A673 (cell line): ENCODE measurements at regions of chr2 and their contacts with region 1.

Region 1: DNA sequence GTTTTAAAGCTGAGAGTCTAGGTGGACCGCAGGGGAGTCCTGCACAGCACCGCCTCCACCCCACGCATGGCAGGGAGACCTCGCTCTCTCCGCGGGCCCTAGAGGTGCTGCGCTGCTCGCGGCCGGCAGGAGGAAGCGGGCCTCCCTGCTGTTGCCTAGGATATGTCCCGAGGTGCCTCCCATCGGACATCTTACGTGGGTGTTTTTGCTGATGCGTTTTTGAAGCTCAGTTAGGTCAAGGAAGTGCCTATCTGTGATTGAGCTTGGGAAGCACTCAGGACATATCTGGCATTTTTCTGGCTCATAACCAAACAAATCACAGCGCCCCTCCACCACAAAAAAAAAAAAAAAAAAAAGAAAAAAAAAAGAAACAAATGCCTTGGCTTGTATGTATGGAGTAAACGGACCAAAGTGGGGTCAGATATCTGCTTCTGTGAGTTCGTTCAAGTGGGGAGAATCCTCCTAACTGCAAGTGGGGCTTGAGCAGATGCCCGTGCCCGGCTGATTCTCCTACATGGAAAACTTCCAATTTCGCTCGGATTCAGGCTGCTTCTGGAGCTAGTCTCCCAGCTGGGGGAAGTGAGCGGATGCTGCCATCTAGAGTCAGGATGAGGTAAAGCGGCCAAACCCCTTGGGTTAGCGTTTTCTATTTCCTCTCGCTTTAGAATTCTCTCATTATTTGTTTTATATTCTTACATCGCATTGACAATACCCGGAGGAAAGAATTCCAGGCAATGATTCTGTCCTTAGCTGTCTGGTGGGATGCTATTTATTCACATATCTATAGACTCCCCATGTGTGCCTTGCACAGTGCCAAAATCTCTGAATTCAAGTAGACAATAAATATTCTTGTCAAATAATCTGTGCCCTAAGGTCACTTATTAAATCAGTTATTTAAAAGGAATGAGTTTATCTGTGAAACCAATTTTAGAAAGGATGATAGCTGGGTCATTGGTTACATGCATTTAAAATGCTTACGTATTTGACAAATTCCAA is 95.3 kb downstream of the CD8B2 start:
- DNase-seq: peak; percentile 86
- H3K4me3 ChIP-seq: peak overlapping the region; percentile 28
- H3K27ac ChIP-seq: no peak overlapping the region
- H3K4me1 ChIP-seq: no peaks in the 10 kb centered on the region
- H3K27me3 ChIP-seq: peaks cover 19% of the 10 kb centered on the region
- CTCF ChIP-seq: peak; percentile 82

Region 2: GRCh38 chr2:106104332-106105062 is 477.9 kb before region 1 on chr2:
- CTCF ChIA-PET with region 1: no interaction called
- POLR2A ChIA-PET with region 1: no interaction called
- intact Hi-C with region 1: loop called (anchors 5 kb)
- DNase-seq: peak; percentile 70
- H3K4me3 ChIP-seq: no peak overlapping the region
- H3K27ac ChIP-seq: no peak overlapping the region
- H3K4me1 ChIP-seq: no peaks in the 10 kb centered on the region
- H3K27me3 ChIP-seq: no peaks in the 10 kb centered on the region
- CTCF ChIP-seq: peak; percentile 93

Region 3: GRCh38 chr2:106537047-106537446 is 45.4 kb before region 1 on chr2:
- CTCF ChIA-PET with region 1: no interaction called
- POLR2A ChIA-PET with region 1: no interaction called
- intact Hi-C with region 1: no loop called
- DNase-seq: no peak
- H3K4me3 ChIP-seq: no peak overlapping the region
- H3K27ac ChIP-seq: no peak overlapping the region
- H3K4me1 ChIP-seq: no peaks in the 10 kb centered on the region
- H3K27me3 ChIP-seq: peaks cover 4% of the 10 kb centered on the region
- CTCF ChIP-seq: no peak

Region 4: DNA sequence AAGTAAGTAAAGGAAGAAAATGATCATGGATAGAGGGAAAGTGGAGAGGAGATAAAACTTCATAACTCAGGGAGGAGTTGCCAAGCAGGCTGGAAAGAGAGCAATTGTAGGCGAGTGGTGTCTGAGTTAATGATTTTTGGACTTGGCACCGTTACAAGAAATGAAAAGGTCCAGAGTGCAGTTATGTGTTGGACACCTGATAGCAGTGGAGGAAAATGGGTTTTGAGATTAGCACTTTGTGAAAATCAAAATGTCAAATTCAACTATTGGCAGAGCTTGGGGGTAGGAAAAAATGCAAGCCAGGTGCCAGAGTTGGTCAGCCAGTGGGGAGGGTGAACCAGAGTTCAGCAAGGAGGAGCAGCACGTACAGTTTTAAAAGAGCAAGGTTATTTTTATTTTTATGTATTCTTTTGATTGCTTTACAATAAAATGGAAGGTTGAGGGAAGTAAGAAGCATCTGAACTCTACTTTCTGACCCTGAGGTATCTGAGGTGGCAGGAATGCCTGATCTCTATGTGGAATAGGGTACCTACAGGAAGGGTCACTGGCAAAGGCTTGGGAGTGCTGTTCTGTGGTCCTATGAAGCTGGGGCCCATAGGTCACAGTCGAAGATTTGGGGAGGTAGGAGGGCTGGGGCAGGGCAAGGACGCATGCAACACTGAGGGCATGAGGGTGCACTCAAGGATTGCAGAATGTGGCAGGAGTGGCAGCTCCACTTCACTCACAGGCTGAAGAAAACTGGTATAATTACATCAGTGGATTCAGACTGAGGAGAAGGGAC is 32.3 kb after region 1 on chr2:
- CTCF ChIA-PET with region 1: interaction called, 10 read pairs
- POLR2A ChIA-PET with region 1: no interaction called
- intact Hi-C with region 1: no loop called
- DNase-seq: no peak
- H3K4me3 ChIP-seq: no peak overlapping the region
- H3K27ac ChIP-seq: no peak overlapping the region
- H3K4me1 ChIP-seq: no peaks in the 10 kb centered on the region
- H3K27me3 ChIP-seq: no peaks in the 10 kb centered on the region
- CTCF ChIP-seq: no peak